Naive thymus-derived CD4-positive, alpha-beta T cell (primary cell): ENCODE measurements at regions of chr2 and their contacts with region 1.

Region 1: GRCh38 chr2:36246320-36246990 is 109.1 kb upstream of the CRIM1 start:
- DNase-seq: peak in 7 of 9 donors; percentile 68 to 87 (median 84)
- ATAC-seq: peak; percentile 89
- H3K4me3 ChIP-seq: no peak overlapping the region
- H3K4me3 Mint-ChIP-seq: peak overlapping the region; percentile 31 to 81 (median 74)
- H3K27ac ChIP-seq: no peak overlapping the region
- H3K27ac Mint-ChIP-seq: peak overlapping the region; percentile 11 to 93 (median 68)
- H3K4me1 ChIP-seq: peaks cover 21 to 52% of the 10 kb centered on the region in 2 donors
- H3K4me1 Mint-ChIP-seq: peaks cover 27 to 68% (median 61%) of the 10 kb centered on the region in 7 donors
- H3K27me3 ChIP-seq: no peaks in the 10 kb centered on the region
- H3K27me3 Mint-ChIP-seq: peaks cover 0 to 13% (median 8%) of the 10 kb centered on the region in 5 donors

Region 2: GRCh38 chr2:36147670-36148390 is 98.6 kb before region 1 on chr2:
- CTCF ChIA-PET with region 1: no interaction called
- POLR2A ChIA-PET with region 1: no interaction called
- intact Hi-C with region 1: loop called in 1 of 2 experiments (anchors 1 kb)
- DNase-seq: no peak
- ATAC-seq: no peak
- H3K4me3 ChIP-seq: no peak overlapping the region
- H3K4me3 Mint-ChIP-seq: peak overlapping the region in 1 of 10 donors; percentile 67
- H3K27ac ChIP-seq: no peak overlapping the region
- H3K27ac Mint-ChIP-seq: peak overlapping the region in 1 of 9 donors; percentile 21
- H3K4me1 ChIP-seq: no peaks in the 10 kb centered on the region
- H3K4me1 Mint-ChIP-seq: peaks cover 0 to 30% (median 5%) of the 10 kb centered on the region in 7 donors
- H3K27me3 ChIP-seq: no peaks in the 10 kb centered on the region
- H3K27me3 Mint-ChIP-seq: peaks cover 0 to 16% (median 0%) of the 10 kb centered on the region in 5 donors

Region 3: GRCh38 chr2:36163520-36164239 is 82.8 kb before region 1 on chr2:
- CTCF ChIA-PET with region 1: no interaction called
- POLR2A ChIA-PET with region 1: no interaction called
- intact Hi-C with region 1: no loop called
- DNase-seq: no peak
- ATAC-seq: no peak
- H3K4me3 ChIP-seq: no peak overlapping the region
- H3K4me3 Mint-ChIP-seq: no peak overlapping the region
- H3K27ac ChIP-seq: no peak overlapping the region
- H3K27ac Mint-ChIP-seq: no peak overlapping the region
- H3K4me1 ChIP-seq: no peaks in the 10 kb centered on the region
- H3K4me1 Mint-ChIP-seq: no peaks in the 10 kb centered on the region
- H3K27me3 ChIP-seq: no peaks in the 10 kb centered on the region
- H3K27me3 Mint-ChIP-seq: peaks cover 0 to 22% (median 0%) of the 10 kb centered on the region in 5 donors

Region 4: GRCh38 chr2:36287363-36288275 is 41.2 kb after region 1 on chr2:
- CTCF ChIA-PET with region 1: interaction called, 3 read pairs
- POLR2A ChIA-PET with region 1: no interaction called
- intact Hi-C with region 1: loop called in 1 of 2 experiments (anchors 5 kb)
- DNase-seq: no peak
- ATAC-seq: no peak
- H3K4me3 ChIP-seq: no peak overlapping the region
- H3K4me3 Mint-ChIP-seq: no peak overlapping the region
- H3K27ac ChIP-seq: no peak overlapping the region
- H3K27ac Mint-ChIP-seq: no peak overlapping the region
- H3K4me1 ChIP-seq: no peaks in the 10 kb centered on the region
- H3K4me1 Mint-ChIP-seq: peaks cover 0 to 5% (median 0%) of the 10 kb centered on the region in 7 donors
- H3K27me3 ChIP-seq: no peaks in the 10 kb centered on the region
- H3K27me3 Mint-ChIP-seq: no peaks in the 10 kb centered on the region

Region 5: DNA sequence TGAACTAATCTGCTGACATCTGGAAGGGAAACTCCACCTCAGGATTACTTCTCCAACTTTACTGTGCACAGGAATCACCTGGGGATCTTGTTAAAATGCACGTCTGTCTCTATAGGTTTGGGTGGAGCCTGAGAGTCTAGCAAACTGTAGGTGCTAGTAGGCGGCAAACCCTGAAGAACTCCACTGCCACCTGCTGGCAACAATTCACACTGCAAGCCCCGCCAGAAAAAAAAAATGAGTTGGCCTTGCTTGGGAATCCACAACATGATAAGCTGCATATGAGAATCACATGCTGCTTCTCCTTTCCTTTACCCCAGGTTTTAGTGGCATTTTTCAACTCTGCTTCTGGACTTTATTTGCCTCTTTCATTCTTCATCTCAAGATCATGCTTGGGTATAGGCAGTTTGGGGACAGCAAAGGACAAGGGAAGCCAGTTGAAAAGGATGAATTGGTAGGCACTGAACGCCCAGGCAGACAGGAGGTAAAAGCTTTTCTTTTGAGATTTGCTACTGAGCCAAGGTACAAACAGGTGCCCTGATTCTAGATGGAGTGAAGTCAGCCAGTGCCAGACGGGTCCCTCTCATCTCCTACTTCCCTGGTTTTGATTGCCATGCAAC is 538.8 kb after region 1 on chr2:
- CTCF ChIA-PET with region 1: no interaction called
- POLR2A ChIA-PET with region 1: no interaction called
- intact Hi-C with region 1: loop called in 1 of 2 experiments (anchors 10 kb)
- DNase-seq: peak; percentile 23 to 74 (median 61)
- ATAC-seq: peak; percentile 85
- H3K4me3 ChIP-seq: no peak overlapping the region
- H3K4me3 Mint-ChIP-seq: no peak overlapping the region
- H3K27ac ChIP-seq: no peak overlapping the region
- H3K27ac Mint-ChIP-seq: peak overlapping the region in 1 of 9 donors; percentile 43
- H3K4me1 ChIP-seq: no peaks in the 10 kb centered on the region
- H3K4me1 Mint-ChIP-seq: peaks cover 0 to 15% (median 2%) of the 10 kb centered on the region in 7 donors
- H3K27me3 ChIP-seq: no peaks in the 10 kb centered on the region
- H3K27me3 Mint-ChIP-seq: peaks cover 0 to 37% (median 5%) of the 10 kb centered on the region in 5 donors